B cell (primary cell): ENCODE measurements at regions of chr2 and their contacts with region 1.

Region 1: GRCh38 chr2:202005272-202005887 is 28.3 kb upstream of the FZD7 start:
- DNase-seq: no peak
- ATAC-seq: peak; percentile 56
- H3K4me3 ChIP-seq: no peak overlapping the region
- H3K4me3 Mint-ChIP-seq: peak overlapping the region; percentile 9
- H3K27ac ChIP-seq: no peak overlapping the region
- H3K27ac Mint-ChIP-seq: peak overlapping the region; percentile 62
- H3K4me1 ChIP-seq: peaks cover 13 to 15% of the 10 kb centered on the region in 2 donors
- H3K4me1 Mint-ChIP-seq: peaks cover 12% of the 10 kb centered on the region
- H3K27me3 ChIP-seq: no peaks in the 10 kb centered on the region
- H3K27me3 Mint-ChIP-seq: peaks cover 5% of the 10 kb centered on the region
- CTCF ChIP-seq: no peak

Region 2: DNA sequence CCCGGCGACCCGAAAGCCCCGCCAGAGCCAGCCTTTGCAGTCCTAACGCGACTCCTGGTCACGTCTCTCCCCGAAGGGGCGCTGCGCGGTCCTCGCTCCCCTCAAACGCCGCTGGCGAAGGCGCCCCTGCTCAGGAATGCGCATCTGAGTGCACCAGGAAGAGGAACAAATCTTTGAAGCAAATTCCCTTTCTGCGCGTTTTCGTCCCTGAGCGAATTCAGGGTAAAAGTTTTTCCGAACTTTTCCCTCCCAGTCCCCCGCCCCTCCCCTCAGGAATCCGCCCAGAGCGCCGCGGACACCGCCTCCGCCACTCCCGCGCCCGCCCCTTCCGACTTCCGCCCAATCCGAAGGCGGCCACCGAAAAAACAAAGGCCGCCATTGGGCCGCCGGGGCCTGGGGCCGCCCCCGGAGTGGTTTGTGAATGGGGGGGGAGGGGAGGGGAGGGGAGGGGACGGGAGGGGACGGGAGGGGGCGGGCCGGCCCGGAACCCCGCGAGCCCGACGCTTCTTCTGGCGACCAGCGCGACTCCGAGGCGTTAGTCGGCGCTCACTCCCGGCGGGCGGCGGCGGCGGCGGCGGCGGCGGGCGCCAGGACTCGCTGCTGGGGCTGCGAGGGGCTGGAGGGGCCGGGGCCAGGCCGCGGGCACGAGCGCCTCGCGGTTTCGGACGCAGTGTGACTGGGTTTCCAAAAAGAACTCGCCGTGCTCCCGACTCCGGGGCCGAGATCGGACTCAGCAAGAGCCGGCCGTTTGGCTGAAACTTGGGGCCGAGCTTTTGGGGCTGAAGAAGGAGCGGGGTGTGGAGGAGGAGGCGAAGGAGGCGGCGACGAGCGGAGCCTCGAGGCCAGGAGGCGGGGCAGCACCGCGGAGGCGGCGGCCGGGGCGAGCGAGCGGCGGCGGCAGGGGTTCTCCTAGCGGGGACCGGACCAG is 28.2 kb after region 1 on chr2 and contains the start of gene FZD7:
- CTCF ChIA-PET with region 1: no interaction called
- POLR2A ChIA-PET with region 1: no interaction called
- intact Hi-C with region 1: loop called (anchors 2 kb)
- DNase-seq: peak; percentile 90
- ATAC-seq: peak; percentile 85
- H3K4me3 ChIP-seq: peak within 1 kb of the TSS; percentile 63 to 89 (median 75)
- H3K4me3 Mint-ChIP-seq: peak within 1 kb of the TSS; percentile 91
- H3K27ac ChIP-seq: no peak within 1 kb of the TSS
- H3K27ac Mint-ChIP-seq: peak within 1 kb of the TSS; percentile 78
- H3K4me1 ChIP-seq: peaks cover 20 to 25% of the 10 kb centered on the region in 2 donors
- H3K4me1 Mint-ChIP-seq: peaks cover 13% of the 10 kb centered on the region
- H3K27me3 ChIP-seq: peaks cover 0 to 43% (median 32%) of the 10 kb centered on the region in 4 experiments
- H3K27me3 Mint-ChIP-seq: peaks cover 22% of the 10 kb centered on the region
- CTCF ChIP-seq: no peak
- total RNA-seq, gene FZD7: 2.1 TPM in 2 replicates

Region 3: DNA sequence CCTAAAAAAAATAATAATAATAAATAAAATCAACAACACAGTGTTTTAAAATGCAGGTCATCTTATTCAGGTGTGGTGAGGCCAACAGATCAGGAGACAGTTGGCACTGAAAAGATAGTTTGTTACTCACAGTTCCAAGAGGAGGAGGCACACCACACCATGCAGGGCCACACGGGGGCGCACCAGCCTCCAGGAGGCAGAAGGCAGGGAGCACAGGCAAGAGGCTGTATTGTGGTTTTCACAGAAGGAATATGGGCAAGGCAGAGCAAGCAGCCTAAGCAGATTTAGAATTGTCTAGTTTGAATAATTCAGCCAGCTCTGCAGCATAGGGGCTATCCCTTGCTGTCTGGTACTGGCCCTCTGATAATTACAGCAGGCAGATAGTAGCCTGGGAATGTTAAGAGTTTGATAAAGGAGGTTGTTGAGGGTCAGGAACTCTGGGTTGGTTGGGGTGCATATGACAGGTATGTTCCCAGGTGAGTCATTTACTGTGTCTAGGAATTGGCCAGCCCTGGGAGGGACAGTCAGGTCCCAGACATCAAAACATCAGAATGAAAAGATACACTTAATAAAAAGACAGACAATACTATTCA is 99.0 kb after region 1 on chr2:
- CTCF ChIA-PET with region 1: no interaction called
- POLR2A ChIA-PET with region 1: interaction called, 16 read pairs
- intact Hi-C with region 1: no loop called
- DNase-seq: no peak
- ATAC-seq: no peak
- H3K4me3 ChIP-seq: no peak overlapping the region
- H3K4me3 Mint-ChIP-seq: no peak overlapping the region
- H3K27ac ChIP-seq: no peak overlapping the region
- H3K27ac Mint-ChIP-seq: no peak overlapping the region
- H3K4me1 ChIP-seq: no peaks in the 10 kb centered on the region
- H3K4me1 Mint-ChIP-seq: no peaks in the 10 kb centered on the region
- H3K27me3 ChIP-seq: no peaks in the 10 kb centered on the region
- H3K27me3 Mint-ChIP-seq: peaks cover 20% of the 10 kb centered on the region
- CTCF ChIP-seq: no peak